Naive thymus-derived CD4-positive, alpha-beta T cell (primary cell): ENCODE measurements at regions of chr2 and their contacts with region 1.

Region 1: GRCh38 chr2:197011799-197012641 is 85.5 kb upstream of the PGAP1 start:
- DNase-seq: peak in 6 of 9 donors; percentile 11 to 51 (median 40)
- ATAC-seq: peak; percentile 76
- H3K4me3 ChIP-seq: no peak overlapping the region
- H3K4me3 Mint-ChIP-seq: no peak overlapping the region
- H3K27ac ChIP-seq: no peak overlapping the region
- H3K27ac Mint-ChIP-seq: peak overlapping the region; percentile 5 to 90 (median 73)
- H3K4me1 ChIP-seq: peaks cover 0 to 3% of the 10 kb centered on the region in 2 donors
- H3K4me1 Mint-ChIP-seq: peaks cover 0 to 18% (median 9%) of the 10 kb centered on the region in 7 donors
- H3K27me3 ChIP-seq: no peaks in the 10 kb centered on the region
- H3K27me3 Mint-ChIP-seq: no peaks in the 10 kb centered on the region

Region 2: GRCh38 chr2:195967336-195967735 is 1044.7 kb before region 1 on chr2:
- CTCF ChIA-PET with region 1: no interaction called
- POLR2A ChIA-PET with region 1: no interaction called
- intact Hi-C with region 1: no loop called
- DNase-seq: no peak
- ATAC-seq: no peak
- H3K4me3 ChIP-seq: no peak overlapping the region
- H3K4me3 Mint-ChIP-seq: no peak overlapping the region
- H3K27ac ChIP-seq: no peak overlapping the region
- H3K27ac Mint-ChIP-seq: no peak overlapping the region
- H3K4me1 ChIP-seq: no peaks in the 10 kb centered on the region
- H3K4me1 Mint-ChIP-seq: peaks cover 0 to 2% (median 0%) of the 10 kb centered on the region in 7 donors
- H3K27me3 ChIP-seq: no peaks in the 10 kb centered on the region
- H3K27me3 Mint-ChIP-seq: peaks cover 6 to 31% (median 19%) of the 10 kb centered on the region in 5 donors

Region 3: DNA sequence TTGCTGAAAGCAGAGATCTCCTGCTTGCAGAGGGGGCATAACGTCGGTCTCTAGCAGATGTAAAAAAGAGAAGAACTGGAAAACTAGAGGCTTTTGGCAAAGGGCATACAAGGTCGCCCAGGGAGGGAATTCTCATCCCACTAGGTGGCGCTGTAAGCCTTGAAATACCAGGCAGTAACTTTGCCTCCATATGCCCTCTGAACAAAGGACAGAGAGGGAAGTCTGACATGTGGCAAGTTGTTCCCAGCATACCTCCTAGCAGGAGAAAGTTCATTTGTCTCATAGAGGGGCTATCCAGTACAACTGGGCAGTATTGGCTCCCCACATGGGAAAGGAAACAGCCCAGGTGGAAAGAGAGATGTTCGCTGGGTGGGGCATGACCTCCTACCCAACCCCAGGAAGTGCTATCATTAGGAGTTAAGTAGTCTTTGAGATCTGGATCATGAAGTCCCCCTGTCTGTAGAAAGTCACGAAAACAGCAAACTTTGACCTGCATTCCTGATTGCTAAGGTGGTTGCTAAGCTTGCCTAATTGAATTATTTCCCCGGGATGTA is 880.6 kb before region 1 on chr2:
- CTCF ChIA-PET with region 1: no interaction called
- POLR2A ChIA-PET with region 1: no interaction called
- intact Hi-C with region 1: no loop called
- DNase-seq: peak in 4 of 9 donors; percentile 30 to 57 (median 50)
- ATAC-seq: peak; percentile 58
- H3K4me3 ChIP-seq: no peak overlapping the region
- H3K4me3 Mint-ChIP-seq: peak overlapping the region in 3 of 10 donors; percentile 1 to 36 (median 32)
- H3K27ac ChIP-seq: no peak overlapping the region
- H3K27ac Mint-ChIP-seq: peak overlapping the region in 8 of 9 donors; percentile 63 to 91 (median 79)
- H3K4me1 ChIP-seq: no peaks in the 10 kb centered on the region
- H3K4me1 Mint-ChIP-seq: peaks cover 0 to 27% (median 16%) of the 10 kb centered on the region in 7 donors
- H3K27me3 ChIP-seq: no peaks in the 10 kb centered on the region
- H3K27me3 Mint-ChIP-seq: no peaks in the 10 kb centered on the region

Region 4: GRCh38 chr2:196967116-196967515 is 44.9 kb before region 1 on chr2:
- CTCF ChIA-PET with region 1: no interaction called
- POLR2A ChIA-PET with region 1: no interaction called
- intact Hi-C with region 1: no loop called
- DNase-seq: no peak
- ATAC-seq: no peak
- H3K4me3 ChIP-seq: no peak overlapping the region
- H3K4me3 Mint-ChIP-seq: no peak overlapping the region
- H3K27ac ChIP-seq: no peak overlapping the region
- H3K27ac Mint-ChIP-seq: no peak overlapping the region
- H3K4me1 ChIP-seq: no peaks in the 10 kb centered on the region
- H3K4me1 Mint-ChIP-seq: peaks cover 0 to 39% (median 0%) of the 10 kb centered on the region in 7 donors
- H3K27me3 ChIP-seq: no peaks in the 10 kb centered on the region
- H3K27me3 Mint-ChIP-seq: no peaks in the 10 kb centered on the region

Region 5: GRCh38 chr2:197001921-197002320 is 10.1 kb before region 1 on chr2:
- CTCF ChIA-PET with region 1: no interaction called
- POLR2A ChIA-PET with region 1: no interaction called
- intact Hi-C with region 1: loop called in 1 of 2 experiments (anchors 2 kb)
- DNase-seq: no peak
- ATAC-seq: no peak
- H3K4me3 ChIP-seq: no peak overlapping the region
- H3K4me3 Mint-ChIP-seq: no peak overlapping the region
- H3K27ac ChIP-seq: no peak overlapping the region
- H3K27ac Mint-ChIP-seq: peak overlapping the region in 2 of 9 donors; percentile 8 to 19
- H3K4me1 ChIP-seq: no peaks in the 10 kb centered on the region
- H3K4me1 Mint-ChIP-seq: peaks cover 0 to 11% (median 0%) of the 10 kb centered on the region in 7 donors
- H3K27me3 ChIP-seq: no peaks in the 10 kb centered on the region
- H3K27me3 Mint-ChIP-seq: no peaks in the 10 kb centered on the region

Region 6: DNA sequence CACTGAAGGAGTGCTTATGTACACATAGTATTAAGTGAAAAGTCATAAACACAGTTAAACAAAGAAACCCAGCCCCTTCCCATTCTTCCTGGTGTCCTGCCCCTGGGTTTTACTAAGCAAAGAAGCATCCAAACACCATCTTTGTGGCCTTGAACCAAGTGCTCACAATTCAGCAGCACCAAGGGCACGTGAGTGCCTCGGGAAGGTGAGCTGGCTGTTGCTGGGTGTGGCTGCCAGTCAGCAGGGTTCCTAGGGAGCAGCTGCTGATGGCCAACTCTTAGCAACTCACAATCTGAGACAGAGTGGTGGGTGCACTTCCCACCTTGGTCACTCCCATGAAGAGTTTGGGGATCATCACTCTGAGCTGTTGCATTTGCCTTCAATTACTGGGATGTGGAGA is 12.2 kb after region 1 on chr2:
- CTCF ChIA-PET with region 1: no interaction called
- POLR2A ChIA-PET with region 1: interaction called, 3 read pairs
- intact Hi-C with region 1: loop called in 1 of 2 experiments (anchors 1 kb)
- DNase-seq: no peak
- ATAC-seq: no peak
- H3K4me3 ChIP-seq: no peak overlapping the region
- H3K4me3 Mint-ChIP-seq: no peak overlapping the region
- H3K27ac ChIP-seq: no peak overlapping the region
- H3K27ac Mint-ChIP-seq: peak overlapping the region in 4 of 9 donors; percentile 33 to 68 (median 46)
- H3K4me1 ChIP-seq: no peaks in the 10 kb centered on the region
- H3K4me1 Mint-ChIP-seq: peaks cover 6 to 20% (median 16%) of the 10 kb centered on the region in 7 donors
- H3K27me3 ChIP-seq: no peaks in the 10 kb centered on the region
- H3K27me3 Mint-ChIP-seq: no peaks in the 10 kb centered on the region

Region 7: DNA sequence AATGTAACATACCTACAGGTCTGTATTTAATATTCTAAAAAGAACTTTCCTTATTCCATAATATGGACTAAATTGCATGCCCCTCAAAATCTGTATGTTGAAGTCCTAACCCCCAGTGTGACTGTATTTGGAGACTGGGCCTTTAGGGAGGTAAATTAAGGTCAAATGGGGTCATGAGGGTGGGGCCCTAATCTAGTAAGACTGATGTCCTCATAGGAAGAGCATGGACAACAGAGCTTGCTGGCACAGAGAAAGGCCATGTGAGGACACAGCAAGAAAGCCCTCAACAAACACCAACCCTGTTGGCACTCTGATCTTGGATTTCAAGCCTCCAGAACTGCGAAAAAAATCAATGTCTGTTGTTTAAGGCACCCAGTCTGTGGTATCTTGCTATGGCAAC is 404.2 kb after region 1 on chr2:
- CTCF ChIA-PET with region 1: no interaction called
- POLR2A ChIA-PET with region 1: no interaction called
- intact Hi-C with region 1: no loop called
- DNase-seq: no peak
- ATAC-seq: no peak
- H3K4me3 ChIP-seq: no peak overlapping the region
- H3K4me3 Mint-ChIP-seq: no peak overlapping the region
- H3K27ac ChIP-seq: no peak overlapping the region
- H3K27ac Mint-ChIP-seq: peak overlapping the region in 2 of 9 donors; percentile 17 to 59
- H3K4me1 ChIP-seq: peaks cover 0 to 4% of the 10 kb centered on the region in 2 donors
- H3K4me1 Mint-ChIP-seq: peaks cover 9 to 26% (median 15%) of the 10 kb centered on the region in 7 donors
- H3K27me3 ChIP-seq: no peaks in the 10 kb centered on the region
- H3K27me3 Mint-ChIP-seq: no peaks in the 10 kb centered on the region